WTC11 (cell line): ENCODE measurements at regions of chr19 and their contacts with region 1.

Region 1: DNA sequence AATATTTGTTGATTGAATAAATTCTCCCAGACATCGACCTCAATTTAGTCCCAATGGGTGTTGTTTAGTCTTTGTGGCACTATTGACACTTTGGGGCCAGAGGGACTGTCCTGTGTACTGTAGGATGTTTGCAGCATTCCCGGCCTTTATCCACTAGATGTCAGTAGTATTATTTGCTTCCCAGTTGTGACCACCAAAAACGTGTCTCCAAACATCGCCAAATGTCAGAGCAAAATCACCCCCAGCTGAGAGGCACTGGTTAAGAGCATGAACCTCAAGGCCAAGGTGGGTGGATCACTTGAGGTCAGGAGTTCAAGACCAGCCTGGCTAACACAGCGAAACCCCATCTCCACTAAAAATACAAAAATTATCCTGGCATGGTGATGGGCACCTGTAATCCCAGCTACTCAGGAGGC is 15.4 kb downstream of the NLRP12 start:
- DNase-seq: peak; percentile 40
- ATAC-seq: peak; percentile 74
- H3K4me3 Mint-ChIP-seq: no peak overlapping the region
- H3K27ac Mint-ChIP-seq: no peak overlapping the region
- H3K4me1 Mint-ChIP-seq: peaks cover 10% of the 10 kb centered on the region
- H3K27me3 Mint-ChIP-seq: peaks cover 9% of the 10 kb centered on the region
- CTCF ChIP-seq: no peak

Region 2: GRCh38 chr19:53553884-53554791 is 254.6 kb before region 1 on chr19:
- CTCF ChIA-PET with region 1: no interaction called
- POLR2A ChIA-PET with region 1: no interaction called
- DNase-seq: peak; percentile 52
- ATAC-seq: peak; percentile 67
- H3K4me3 Mint-ChIP-seq: peak overlapping the region; percentile 77
- H3K27ac Mint-ChIP-seq: peak overlapping the region; percentile 82
- H3K4me1 Mint-ChIP-seq: peaks cover 16% of the 10 kb centered on the region
- H3K27me3 Mint-ChIP-seq: no peaks in the 10 kb centered on the region
- CTCF ChIP-seq: no peak

Region 3: GRCh38 chr19:53621885-53622740 is 186.6 kb before region 1 on chr19:
- CTCF ChIA-PET with region 1: no interaction called
- POLR2A ChIA-PET with region 1: no interaction called
- DNase-seq: no peak
- ATAC-seq: no peak
- H3K4me3 Mint-ChIP-seq: no peak overlapping the region
- H3K27ac Mint-ChIP-seq: peak overlapping the region; percentile 15
- H3K4me1 Mint-ChIP-seq: peaks cover 12% of the 10 kb centered on the region
- H3K27me3 Mint-ChIP-seq: no peaks in the 10 kb centered on the region
- CTCF ChIP-seq: no peak

Region 4: GRCh38 chr19:53772943-53773342 is 35.8 kb before region 1 on chr19:
- CTCF ChIA-PET with region 1: interaction called, 14 read pairs
- POLR2A ChIA-PET with region 1: no interaction called
- DNase-seq: peak; percentile 78
- ATAC-seq: peak; percentile 69
- H3K4me3 Mint-ChIP-seq: peak overlapping the region; percentile 32
- H3K27ac Mint-ChIP-seq: peak overlapping the region; percentile 95
- H3K4me1 Mint-ChIP-seq: peaks cover 54% of the 10 kb centered on the region
- H3K27me3 Mint-ChIP-seq: no peaks in the 10 kb centered on the region
- CTCF ChIP-seq: peak; percentile 62

Region 5: DNA sequence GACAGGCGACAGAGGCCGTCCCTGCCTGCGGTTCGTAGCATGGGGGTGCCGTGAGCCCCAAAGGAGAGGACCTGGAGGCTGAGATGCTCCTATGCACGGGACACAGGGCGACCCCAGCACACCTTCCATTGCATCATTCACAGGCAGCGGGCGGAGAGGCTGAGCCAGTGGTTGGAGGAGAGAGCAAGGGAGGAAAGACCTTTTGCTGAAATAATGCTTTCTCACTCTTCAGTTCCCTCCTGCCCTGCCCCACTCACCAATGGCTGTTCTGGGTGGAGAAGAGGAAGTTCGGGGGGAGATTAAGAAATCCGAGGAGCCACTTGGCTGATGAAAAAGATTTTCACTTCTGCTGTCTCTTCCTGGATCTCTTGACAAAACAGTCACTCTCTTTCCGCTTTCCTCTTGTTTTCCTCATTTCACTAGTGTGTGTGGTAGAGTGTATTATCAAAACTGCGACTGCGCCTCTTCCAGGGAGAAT is 15.5 kb after region 1 on chr19 and contains the start of gene NLRP12:
- CTCF ChIA-PET with region 1: interaction called, 18 read pairs
- POLR2A ChIA-PET with region 1: no interaction called
- DNase-seq: no peak
- ATAC-seq: peak; percentile 44
- H3K4me3 Mint-ChIP-seq: no peak within 1 kb of the TSS
- H3K27ac Mint-ChIP-seq: peak within 1 kb of the TSS; percentile 84
- H3K4me1 Mint-ChIP-seq: peaks cover 20% of the 10 kb centered on the region
- H3K27me3 Mint-ChIP-seq: no peaks in the 10 kb centered on the region
- CTCF ChIP-seq: no peak
- total RNA-seq, gene NLRP12: 4.7 to 5.6 TPM (median 4.9 TPM) in 3 replicates

Region 6: DNA sequence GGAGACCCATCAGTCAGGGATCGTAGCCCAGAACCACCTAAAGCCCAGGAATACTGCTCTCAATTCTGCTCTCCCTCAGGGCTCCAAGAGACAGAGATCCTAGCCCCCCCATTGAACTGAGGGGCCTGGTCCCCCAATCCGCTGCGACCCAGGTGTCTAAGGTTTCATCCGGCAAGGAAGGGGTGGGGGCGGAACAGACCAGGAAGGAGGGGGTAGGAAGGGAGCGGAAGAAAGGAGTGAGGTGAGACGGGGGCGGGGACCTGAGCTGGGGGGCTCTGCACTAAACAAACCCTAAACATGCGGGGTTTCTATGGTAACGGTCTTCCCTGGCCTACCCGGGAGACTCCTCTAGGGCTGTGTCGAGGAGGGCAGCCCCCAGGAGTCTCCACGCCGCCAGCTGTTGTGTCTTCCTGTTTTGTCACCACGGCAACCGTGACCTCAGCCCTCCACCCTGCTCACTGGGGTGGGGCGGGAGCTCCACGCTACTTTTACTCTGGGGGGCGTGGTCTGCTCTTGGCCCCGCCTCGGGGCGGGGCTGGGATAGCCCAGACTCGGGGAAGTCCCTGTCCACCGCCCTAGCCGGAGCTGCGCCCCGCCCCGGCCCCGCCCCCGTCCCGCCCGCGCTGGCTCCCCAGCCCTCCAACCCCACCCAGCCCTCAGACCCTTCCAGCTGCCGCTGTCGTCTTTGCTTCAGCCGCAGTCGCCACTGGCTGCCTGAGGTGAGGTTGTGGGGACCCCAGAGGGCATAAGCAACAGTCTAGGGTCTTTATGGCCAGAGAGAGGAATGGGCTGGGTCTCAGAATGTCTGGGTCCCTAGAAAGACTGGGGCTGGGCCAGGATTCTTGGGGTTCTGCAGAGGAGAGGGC is 58.7 kb after region 1 on chr19 and contains the start of gene MYADM:
- CTCF ChIA-PET with region 1: interaction called, 25 read pairs
- POLR2A ChIA-PET with region 1: no interaction called
- DNase-seq: peak; percentile 100
- ATAC-seq: peak; percentile 71
- H3K4me3 Mint-ChIP-seq: peak within 1 kb of the TSS; percentile 93
- H3K27ac Mint-ChIP-seq: peak within 1 kb of the TSS; percentile 99
- H3K4me1 Mint-ChIP-seq: peaks cover 19% of the 10 kb centered on the region
- H3K27me3 Mint-ChIP-seq: peaks cover 5% of the 10 kb centered on the region
- CTCF ChIP-seq: no peak
- total RNA-seq, gene MYADM: 78.6 to 86.4 TPM (median 79.7 TPM) in 3 replicates

Region 7: GRCh38 chr19:53898636-53899341 is 90.1 kb after region 1 on chr19:
- CTCF ChIA-PET with region 1: interaction called, 11 read pairs
- POLR2A ChIA-PET with region 1: no interaction called
- DNase-seq: peak; percentile 100
- ATAC-seq: peak; percentile 92
- H3K4me3 Mint-ChIP-seq: peak overlapping the region; percentile 81
- H3K27ac Mint-ChIP-seq: peak overlapping the region; percentile 100
- H3K4me1 Mint-ChIP-seq: peaks cover 33% of the 10 kb centered on the region
- H3K27me3 Mint-ChIP-seq: 0 out of 2 replicates have a peak, but pooled peaks cover 9% of the 10 kb centered on the region
- CTCF ChIP-seq: no peak

Region 8: DNA sequence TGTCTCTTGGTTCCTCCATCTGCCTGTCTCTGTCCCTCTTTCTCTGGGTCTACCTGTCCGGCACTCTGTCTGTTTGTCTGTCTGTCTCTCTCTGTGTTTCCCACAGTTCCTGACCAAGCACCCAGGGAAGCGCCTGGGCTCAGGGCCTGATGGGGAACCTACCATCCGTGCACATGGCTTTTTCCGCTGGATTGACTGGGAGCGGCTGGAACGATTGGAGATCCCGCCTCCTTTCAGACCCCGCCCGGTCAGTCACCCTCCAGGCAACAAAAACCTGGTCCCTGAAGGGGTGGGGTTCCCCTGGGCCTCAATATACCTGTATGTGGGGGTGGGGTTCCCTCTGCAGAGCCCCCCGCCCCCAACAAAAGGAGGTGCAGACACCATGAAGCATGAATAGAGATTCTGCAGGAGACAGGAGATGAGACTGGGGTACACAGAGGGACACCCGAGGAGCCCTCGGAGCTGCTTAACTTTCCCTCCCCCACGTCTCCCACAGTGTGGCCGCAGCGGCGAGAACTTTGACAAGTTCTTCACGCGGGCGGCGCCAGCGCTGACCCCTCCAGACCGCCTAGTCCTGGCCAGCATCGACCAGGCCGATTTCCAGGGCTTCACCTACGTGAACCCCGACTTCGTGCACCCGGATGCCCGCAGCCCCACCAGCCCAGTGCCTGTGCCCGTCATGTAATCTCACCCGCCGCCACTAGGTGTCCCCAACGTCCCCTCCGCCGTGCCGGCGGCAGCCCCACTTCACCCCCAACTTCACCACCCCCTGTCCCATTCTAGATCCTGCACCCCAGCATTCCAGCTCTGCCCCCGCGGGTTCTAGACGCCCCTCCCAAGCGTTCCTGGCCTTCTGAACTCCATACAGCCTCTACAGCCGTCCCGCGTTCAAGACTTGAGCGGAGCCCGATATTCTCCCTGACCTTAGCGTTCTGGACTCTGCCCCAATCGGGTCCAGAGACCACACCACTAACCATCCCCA is 97.8 kb after region 1 on chr19:
- CTCF ChIA-PET with region 1: interaction called, 12 read pairs
- POLR2A ChIA-PET with region 1: no interaction called
- DNase-seq: peak; percentile 89
- ATAC-seq: peak; percentile 15
- H3K4me3 Mint-ChIP-seq: peak overlapping the region; percentile 88
- H3K27ac Mint-ChIP-seq: no peak overlapping the region; the same call in 1 of the 2 replicates
- H3K4me1 Mint-ChIP-seq: peaks cover 34% of the 10 kb centered on the region
- H3K27me3 Mint-ChIP-seq: peaks cover 61% of the 10 kb centered on the region
- CTCF ChIP-seq: peak; percentile 98

Region 9: DNA sequence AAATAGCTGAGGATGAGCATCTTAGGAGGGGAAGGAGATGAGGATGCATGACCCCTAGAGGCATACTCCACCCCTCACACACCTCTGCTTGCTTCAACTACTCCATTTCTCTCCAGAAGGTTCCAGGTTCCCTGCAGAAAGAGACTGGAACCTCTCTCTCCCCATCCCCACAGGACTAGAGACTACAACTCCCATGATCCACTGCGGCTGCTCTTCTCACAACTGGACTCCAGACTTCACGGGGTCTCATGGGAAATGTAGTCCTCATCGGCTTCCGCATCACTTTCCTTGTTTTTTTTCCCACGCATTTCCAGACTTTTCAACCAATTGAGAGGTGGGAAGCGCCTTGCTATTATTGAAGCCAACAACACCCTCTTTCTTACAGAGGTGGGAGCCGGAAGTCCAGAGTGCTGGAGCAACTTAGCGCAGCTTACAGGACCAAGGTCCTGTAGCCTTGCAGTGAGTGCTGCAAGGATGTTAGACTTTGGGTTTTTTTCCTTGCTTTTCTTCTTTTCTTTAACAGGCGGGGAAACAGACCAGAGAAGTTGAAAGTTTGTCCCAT is 168.8 kb after region 1 on chr19:
- CTCF ChIA-PET with region 1: interaction called, 10 read pairs
- POLR2A ChIA-PET with region 1: interaction called, 9 read pairs
- DNase-seq: peak; percentile 82
- ATAC-seq: 0 out of 2 replicates have a peak, but pooled peaks have one; percentile 1
- H3K4me3 Mint-ChIP-seq: peak overlapping the region; percentile 93
- H3K27ac Mint-ChIP-seq: peak overlapping the region; percentile 94
- H3K4me1 Mint-ChIP-seq: peaks cover 15% of the 10 kb centered on the region
- H3K27me3 Mint-ChIP-seq: peaks cover 4% of the 10 kb centered on the region; the same call in 1 of the 2 replicates
- CTCF ChIP-seq: no peak